ENCODE measurements at regions of chr12 and their contacts with region 1.

Region 1: DNA sequence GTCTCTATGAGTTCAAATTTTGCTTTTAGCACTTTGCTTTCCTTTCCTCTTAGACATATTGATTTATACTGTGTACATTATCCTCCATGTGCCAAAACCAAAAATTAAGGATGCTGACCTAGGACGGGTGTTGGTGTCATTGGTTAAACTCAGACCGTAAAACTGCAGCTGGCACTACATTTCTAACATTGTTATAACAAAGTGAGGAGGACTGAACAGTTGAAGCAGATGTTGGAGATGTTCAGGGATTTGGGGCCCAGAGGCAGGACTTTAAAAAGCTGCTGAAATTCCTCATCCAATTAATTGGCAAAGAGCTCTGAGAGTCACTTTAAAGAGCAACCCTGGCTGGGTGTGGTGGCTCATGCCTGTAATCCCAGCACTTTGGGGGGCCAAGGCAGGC is 72.4 kb downstream of the TMTC1 start:
- DNase-seq: no peak
- ATAC-seq: no peak
- H3K4me3 Mint-ChIP-seq: no peak overlapping the region
- H3K27ac Mint-ChIP-seq: no peak overlapping the region; the same call in 1 of the 2 replicates
- H3K4me1 Mint-ChIP-seq: peaks cover 56% of the 10 kb centered on the region
- H3K27me3 Mint-ChIP-seq: no peaks in the 10 kb centered on the region
- CTCF ChIP-seq: no peak

Region 2: GRCh38 chr12:29608581-29608980 is 102.8 kb before region 1 on chr12:
- CTCF ChIA-PET with region 1: no interaction called
- POLR2A ChIA-PET with region 1: interaction called, 11 read pairs
- DNase-seq: no peak
- ATAC-seq: peak; percentile 35
- H3K4me3 Mint-ChIP-seq: no peak overlapping the region
- H3K27ac Mint-ChIP-seq: peak overlapping the region; percentile 73
- H3K4me1 Mint-ChIP-seq: peaks cover 19% of the 10 kb centered on the region
- H3K27me3 Mint-ChIP-seq: no peaks in the 10 kb centered on the region
- CTCF ChIP-seq: no peak

Measured in WTC11 (cell line).